GM12878 (cell line): ENCODE measurements at regions of chr5 and their contacts with region 1.

Region 1: DNA sequence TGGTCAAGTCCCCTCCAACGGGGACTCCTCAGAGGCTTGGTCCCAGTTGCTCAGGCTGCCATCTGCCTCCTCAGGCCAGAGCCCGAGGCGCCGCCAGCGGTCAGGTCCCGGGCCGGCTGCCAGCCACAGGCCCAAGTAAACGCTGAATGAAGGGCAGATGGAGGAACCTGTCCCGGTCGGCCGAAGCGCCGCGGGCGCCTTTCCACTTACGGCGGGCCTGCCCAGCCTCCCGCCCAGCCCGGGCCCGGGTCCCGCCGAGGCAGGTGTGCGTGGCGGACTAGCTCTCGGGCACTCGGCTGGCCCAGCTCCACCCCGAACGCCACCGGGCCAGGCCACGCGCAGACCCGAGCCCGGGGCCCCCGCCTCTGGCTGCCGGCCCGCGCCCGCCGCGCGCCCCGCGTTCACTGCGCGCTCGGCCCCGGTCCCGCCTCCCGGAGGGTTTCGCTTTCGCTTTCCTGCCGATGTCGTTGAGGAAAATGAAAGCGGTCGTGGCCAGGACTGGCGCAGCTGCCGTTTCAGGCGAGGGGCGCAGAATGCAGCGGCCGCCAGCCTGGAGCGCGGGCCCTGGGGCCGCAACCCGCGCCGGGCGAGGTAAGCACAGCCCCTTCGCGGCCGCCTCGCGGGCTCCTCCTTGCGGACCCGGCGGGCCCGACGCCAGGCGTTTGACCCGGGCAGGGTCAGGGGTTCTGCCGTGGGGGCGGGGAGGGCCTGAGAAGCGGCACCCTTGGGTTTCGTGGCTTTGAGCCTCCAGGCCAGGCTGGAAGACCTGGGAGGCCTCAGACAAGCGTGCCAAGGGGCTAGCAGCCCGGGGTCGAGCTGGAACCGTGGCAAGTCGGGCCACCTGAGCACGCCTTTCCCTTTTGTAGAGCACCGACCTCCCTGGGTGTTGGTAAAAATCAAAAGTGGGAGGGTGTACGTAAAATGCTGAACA is 41.2 kb downstream of the SLC22A5 start:
- DNase-seq: no peak
- ATAC-seq: peak; percentile 68
- H3K4me3 ChIP-seq: peak overlapping the region; percentile 89
- H3K27ac ChIP-seq: peak overlapping the region; percentile 95
- H3K4me1 ChIP-seq: peaks cover 11% of the 10 kb centered on the region
- H3K27me3 ChIP-seq: no peaks in the 10 kb centered on the region
- CTCF ChIP-seq: peak; percentile 54 to 67 (median 61)
- EP300 ChIP-seq: peak in 1 of 2 experiments; percentile 39; a peak in 1 of 4 replicates
- POLR2A ChIP-seq: peak; percentile 90
- RAD21 ChIP-seq: peak; percentile 51; the same call in 1 of the 2 replicates

Region 2: GRCh38 chr5:132180134-132180745 is 230.5 kb before region 1 on chr5:
- CTCF ChIA-PET with region 1: no interaction called
- POLR2A ChIA-PET with region 1: no interaction called
- RAD21 ChIA-PET with region 1: no interaction called
- SMC1A ChIA-PET with region 1: no interaction called
- in situ Hi-C with region 1: no loop called
- intact Hi-C with region 1: no loop called
- DNase-seq: no peak
- ATAC-seq: peak; percentile 63
- H3K4me3 ChIP-seq: no peak overlapping the region
- H3K27ac ChIP-seq: no peak overlapping the region
- H3K4me1 ChIP-seq: peaks cover 11% of the 10 kb centered on the region
- H3K27me3 ChIP-seq: no peaks in the 10 kb centered on the region
- CTCF ChIP-seq: peak; percentile 66 to 69 (median 69)
- EP300 ChIP-seq: no peak
- POLR2A ChIP-seq: no peak
- RAD21 ChIP-seq: peak; percentile 84

Region 3: GRCh38 chr5:132344775-132345524 is 65.8 kb before region 1 on chr5:
- CTCF ChIA-PET with region 1: no interaction called
- POLR2A ChIA-PET with region 1: no interaction called
- RAD21 ChIA-PET with region 1: no interaction called
- SMC1A ChIA-PET with region 1: no interaction called
- in situ Hi-C with region 1: no loop called
- intact Hi-C with region 1: no loop called
- DNase-seq: no peak
- ATAC-seq: no peak
- H3K4me3 ChIP-seq: no peak overlapping the region
- H3K27ac ChIP-seq: no peak overlapping the region
- H3K4me1 ChIP-seq: no peaks in the 10 kb centered on the region
- H3K27me3 ChIP-seq: no peaks in the 10 kb centered on the region; a peak in 1 of 4 replicates
- CTCF ChIP-seq: no peak
- EP300 ChIP-seq: no peak
- POLR2A ChIP-seq: no peak
- RAD21 ChIP-seq: no peak

Region 4: GRCh38 chr5:132394667-132395259 is 16.0 kb before region 1 on chr5:
- CTCF ChIA-PET with region 1: interaction called, 31 read pairs
- POLR2A ChIA-PET with region 1: interaction called, 16 read pairs
- RAD21 ChIA-PET with region 1: interaction called, 6 read pairs
- SMC1A ChIA-PET with region 1: interaction called, 44 read pairs
- in situ Hi-C with region 1: no loop called
- intact Hi-C with region 1: no loop called
- DNase-seq: no peak
- ATAC-seq: peak; percentile 95
- H3K4me3 ChIP-seq: no peak overlapping the region
- H3K27ac ChIP-seq: no peak overlapping the region
- H3K4me1 ChIP-seq: peaks cover 9% of the 10 kb centered on the region
- H3K27me3 ChIP-seq: no peaks in the 10 kb centered on the region
- CTCF ChIP-seq: no peak
- EP300 ChIP-seq: no peak
- POLR2A ChIP-seq: no peak
- RAD21 ChIP-seq: no peak

Region 5: GRCh38 chr5:132426525-132427138 is 15.9 kb after region 1 on chr5:
- CTCF ChIA-PET with region 1: interaction called, 37 read pairs
- POLR2A ChIA-PET with region 1: interaction called, 97 read pairs
- RAD21 ChIA-PET with region 1: interaction called, 115 read pairs
- SMC1A ChIA-PET with region 1: interaction called, 58 read pairs
- in situ Hi-C with region 1: no loop called
- intact Hi-C with region 1: loop called (anchors 1 kb)
- DNase-seq: no peak
- ATAC-seq: peak; percentile 62
- H3K4me3 ChIP-seq: peak overlapping the region; percentile 49
- H3K27ac ChIP-seq: peak overlapping the region; percentile 94
- H3K4me1 ChIP-seq: peaks cover 90% of the 10 kb centered on the region
- H3K27me3 ChIP-seq: no peaks in the 10 kb centered on the region
- CTCF ChIP-seq: peak; percentile 47 to 56 (median 52)
- EP300 ChIP-seq: peak; percentile 17 to 67; a peak in 3 of 4 replicates
- POLR2A ChIP-seq: peak; percentile 88
- RAD21 ChIP-seq: peak; percentile 42; the same call in 1 of the 2 replicates